ENCODE measurements at regions of chr4 and their contacts with region 1.

Region 1: GRCh38 chr4:105933048-105933447 is 37.8 kb downstream of the NPNT start:
- DNase-seq: no peak
- H3K4me3 ChIP-seq: no peak overlapping the region
- H3K27ac ChIP-seq: no peak overlapping the region
- H3K4me1 ChIP-seq: peaks cover 25 to 29% of the 10 kb centered on the region in 2 donors
- H3K27me3 ChIP-seq: no peaks in the 10 kb centered on the region
- CTCF ChIP-seq: no peak
- POLR2A ChIP-seq: no peak

Region 2: DNA sequence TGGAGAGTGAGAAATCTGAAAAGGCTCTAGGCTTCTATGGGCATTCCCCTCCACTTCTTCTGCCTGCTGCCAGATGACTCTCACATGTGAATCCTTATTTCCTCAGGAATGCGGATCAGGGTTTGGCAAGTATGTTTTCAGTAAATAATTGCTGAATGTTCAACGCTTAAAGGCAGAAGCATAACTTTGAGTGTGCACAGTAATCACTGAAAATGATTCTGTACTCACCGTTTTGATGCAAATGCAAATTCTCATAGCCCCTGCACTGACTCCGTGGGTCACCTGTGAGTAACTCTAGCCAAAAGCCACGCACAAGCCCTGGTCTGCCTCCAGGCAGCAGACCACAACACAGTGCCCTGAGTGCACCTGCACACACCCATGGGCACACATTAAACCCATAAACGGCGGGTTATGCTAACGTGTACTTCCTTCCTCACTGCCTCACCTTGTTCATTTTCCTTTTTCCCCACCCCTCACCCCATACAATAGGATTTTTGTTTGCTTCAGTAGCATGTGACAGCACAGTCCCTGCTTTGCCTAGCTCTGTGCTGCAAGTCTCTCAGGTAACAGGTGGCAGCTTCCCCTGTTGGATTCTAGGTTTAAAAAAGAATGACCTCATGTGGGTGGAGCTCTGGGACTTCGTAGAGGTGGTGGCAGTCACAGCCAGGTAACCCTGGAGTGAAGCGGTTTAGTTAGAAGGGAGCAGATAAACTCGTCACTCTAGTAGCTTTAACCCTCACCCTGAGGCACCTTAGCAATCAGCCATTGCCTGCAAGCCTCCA is 380.9 kb before region 1 on chr4 and contains the start of gene ARHGEF38:
- intact Hi-C with region 1: no loop called
- DNase-seq: peak; percentile 49 to 62
- H3K4me3 ChIP-seq: peak within 1 kb of the TSS in 1 of 3 donors; percentile 20
- H3K27ac ChIP-seq: peak within 1 kb of the TSS; percentile 65 to 70 (median 67)
- H3K4me1 ChIP-seq: peaks cover 7 to 28% of the 10 kb centered on the region in 2 donors
- H3K27me3 ChIP-seq: no peaks in the 10 kb centered on the region
- CTCF ChIP-seq: no peak
- POLR2A ChIP-seq: peak in 1 of 2 donors; percentile 52
- total RNA-seq, gene ARHGEF38: 2.5 to 10.1 (median 4.5) TPM

Region 3: DNA sequence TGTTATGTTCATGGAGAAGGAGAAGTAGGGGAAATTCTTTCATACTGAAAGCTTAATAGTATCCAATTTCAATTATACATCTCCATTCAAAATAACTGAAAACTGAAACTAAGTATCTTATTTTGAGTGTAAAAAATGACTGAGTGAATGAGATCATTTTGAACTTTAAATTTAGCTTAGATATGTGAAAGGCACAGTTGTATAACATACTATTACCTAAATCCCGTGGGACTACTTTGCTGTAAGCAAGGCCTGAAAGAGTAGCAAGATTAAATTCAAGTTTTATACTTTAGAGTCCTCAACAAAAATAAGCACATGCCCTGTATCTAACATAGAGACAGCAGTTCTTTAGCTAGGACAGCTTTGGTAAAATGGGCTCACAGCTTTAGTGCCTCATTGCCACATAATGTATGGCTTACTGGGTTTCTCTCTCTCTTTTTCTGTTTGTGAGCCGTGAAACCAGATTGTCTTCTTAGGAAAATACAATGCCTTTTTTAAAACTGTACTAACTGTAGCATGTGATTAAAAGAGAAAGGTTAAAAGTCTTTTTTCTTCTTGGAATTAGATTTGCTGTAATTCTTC is 181.2 kb before region 1 on chr4:
- intact Hi-C with region 1: no loop called
- DNase-seq: no peak
- H3K4me3 ChIP-seq: no peak overlapping the region
- H3K27ac ChIP-seq: no peak overlapping the region
- H3K4me1 ChIP-seq: no peaks in the 10 kb centered on the region
- H3K27me3 ChIP-seq: no peaks in the 10 kb centered on the region
- CTCF ChIP-seq: no peak
- POLR2A ChIP-seq: no peak

Region 4: DNA sequence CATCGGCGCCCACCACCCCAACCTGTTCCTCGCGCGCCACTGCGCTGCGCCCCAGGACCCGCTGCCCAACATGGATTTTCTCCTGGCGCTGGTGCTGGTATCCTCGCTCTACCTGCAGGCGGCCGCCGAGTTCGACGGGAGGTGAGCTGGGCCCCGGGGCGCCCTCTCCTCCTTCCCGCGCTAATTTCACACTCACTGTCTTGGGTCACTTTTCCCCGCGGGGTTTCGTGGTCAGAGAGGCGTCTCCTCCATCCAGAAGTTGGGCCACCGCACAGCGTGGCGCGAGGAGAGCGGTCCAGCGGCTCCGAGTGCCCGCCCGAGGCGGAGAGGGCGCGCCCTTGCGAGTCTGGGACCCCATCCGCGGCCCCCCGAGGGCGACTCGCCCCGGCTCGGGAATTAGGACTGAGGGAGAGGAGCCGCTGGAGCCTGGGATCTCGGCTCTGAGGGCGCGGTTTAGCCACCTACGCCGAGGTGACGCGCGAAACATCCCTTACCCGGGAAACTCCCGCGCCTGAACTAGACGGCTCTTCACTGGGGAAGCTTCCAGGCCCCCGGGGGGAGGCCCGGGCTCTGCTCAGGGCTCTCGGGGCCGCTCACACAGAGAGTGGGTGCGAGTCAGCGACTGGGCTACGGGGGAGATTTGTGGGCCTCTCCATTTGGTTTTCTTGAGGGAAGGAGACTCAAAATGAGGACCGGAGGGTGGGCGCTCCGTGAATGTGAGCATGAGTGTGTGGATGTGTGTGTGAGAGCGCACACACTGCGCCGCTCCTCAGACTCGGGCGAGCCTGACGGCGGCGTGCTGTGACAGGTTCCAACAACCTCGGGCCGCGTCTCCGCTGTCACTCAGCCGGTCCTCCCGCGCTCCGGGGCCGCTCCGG is 37.2 kb before region 1 on chr4:
- intact Hi-C with region 1: loop called (anchors 5 kb)
- DNase-seq: peak; percentile 65 to 66
- H3K4me3 ChIP-seq: peak overlapping the region; percentile 54 to 81 (median 77)
- H3K27ac ChIP-seq: peak overlapping the region; percentile 86 to 96 (median 95)
- H3K4me1 ChIP-seq: peaks cover 30 to 41% of the 10 kb centered on the region in 2 donors
- H3K27me3 ChIP-seq: no peaks in the 10 kb centered on the region
- CTCF ChIP-seq: peak in 3 of 6 experiments; percentile 24 to 37 (median 28)
- POLR2A ChIP-seq: peak in 1 of 2 donors; percentile 32

Measured in thyroid gland (tissue), 4 donors.